Mammary epithelial cell (primary cell): ENCODE measurements at regions of chr12 and their contacts with region 1.

Region 1: GRCh38 chr12:54324617-54325441 is at the start of gene COPZ1:
- DNase-seq: peak; percentile 100
- H3K4me3 ChIP-seq: peak within 1 kb of the TSS; percentile 60 to 80 (median 75)
- H3K27ac ChIP-seq: peak within 1 kb of the TSS; percentile 91
- H3K4me1 ChIP-seq: peaks cover 12% of the 10 kb centered on the region
- H3K27me3 ChIP-seq: no peaks in the 10 kb centered on the region
- CTCF ChIP-seq: peak; percentile 73 to 85
- total RNA-seq, gene COPZ1: 113 to 155 TPM

Region 2: GRCh38 chr12:54214553-54215406 is 110.0 kb before region 1 on chr12:
- CTCF ChIA-PET with region 1: interaction called, 3 read pairs
- dilution Hi-C with region 1: loop called (anchors 5 kb)
- in situ Hi-C with region 1: no loop called
- intact Hi-C with region 1: no loop called
- DNase-seq: peak; percentile 72
- H3K4me3 ChIP-seq: peak overlapping the region; percentile 19 to 29 (median 20)
- H3K27ac ChIP-seq: no peak overlapping the region
- H3K4me1 ChIP-seq: peaks cover 14% of the 10 kb centered on the region
- H3K27me3 ChIP-seq: no peaks in the 10 kb centered on the region
- CTCF ChIP-seq: peak; percentile 91 to 98

Region 3: GRCh38 chr12:54251667-54252284 is 73.1 kb before region 1 on chr12:
- CTCF ChIA-PET with region 1: interaction called, 5 read pairs
- dilution Hi-C with region 1: no loop called
- in situ Hi-C with region 1: no loop called
- intact Hi-C with region 1: loop called (anchors 1 kb)
- DNase-seq: no peak
- H3K4me3 ChIP-seq: no peak overlapping the region
- H3K27ac ChIP-seq: no peak overlapping the region
- H3K4me1 ChIP-seq: no peaks in the 10 kb centered on the region
- H3K27me3 ChIP-seq: no peaks in the 10 kb centered on the region
- CTCF ChIP-seq: peak; percentile 68 to 76

Region 4: DNA sequence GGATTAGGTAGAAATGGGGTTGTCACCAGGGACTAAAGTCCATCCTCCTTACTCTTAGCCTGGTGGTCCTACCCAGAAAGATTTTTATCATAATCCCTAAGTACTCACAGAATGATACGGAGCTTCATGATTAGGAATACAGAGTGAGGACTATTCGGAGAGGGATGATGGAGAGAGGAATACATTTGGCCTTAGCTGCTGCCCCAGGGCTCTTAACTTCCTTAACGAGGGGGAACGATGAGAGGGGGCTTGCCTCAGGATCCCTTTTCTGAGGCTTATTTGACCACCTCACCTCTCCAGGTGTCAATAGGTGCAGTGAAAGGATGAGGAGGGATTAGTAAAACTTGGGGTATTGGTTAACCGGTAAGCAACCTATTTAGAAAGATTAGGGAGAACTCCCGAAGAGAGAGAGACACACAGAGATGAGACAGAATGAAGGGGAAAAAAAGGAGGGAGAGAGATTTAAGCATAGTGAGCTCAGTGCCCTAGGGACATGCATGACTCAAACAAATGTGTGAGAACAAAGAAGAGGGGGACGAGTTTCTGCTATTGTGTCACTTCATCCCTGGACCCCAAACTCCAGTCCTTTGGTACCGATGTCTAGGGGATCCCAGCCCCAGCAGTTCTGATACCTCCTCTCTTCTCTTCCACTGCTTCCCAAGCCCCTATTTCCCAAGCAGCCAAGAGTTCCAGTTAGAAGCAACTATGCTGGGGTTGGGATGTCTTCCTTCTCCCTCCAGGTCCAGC is 25.1 kb before region 1 on chr12:
- CTCF ChIA-PET with region 1: interaction called, 10 read pairs
- dilution Hi-C with region 1: no loop called
- in situ Hi-C with region 1: no loop called
- intact Hi-C with region 1: loop called (anchors 1 kb)
- DNase-seq: no peak
- H3K4me3 ChIP-seq: no peak overlapping the region
- H3K27ac ChIP-seq: no peak overlapping the region
- H3K4me1 ChIP-seq: peaks cover 40% of the 10 kb centered on the region
- H3K27me3 ChIP-seq: no peaks in the 10 kb centered on the region
- CTCF ChIP-seq: no peak

Region 5: GRCh38 chr12:54359033-54359761 is 34.4 kb after region 1 on chr12:
- CTCF ChIA-PET with region 1: interaction called, 11 read pairs
- dilution Hi-C with region 1: no loop called
- in situ Hi-C with region 1: no loop called
- intact Hi-C with region 1: no loop called
- DNase-seq: peak; percentile 98
- H3K4me3 ChIP-seq: peak overlapping the region; percentile 43 to 73 (median 53)
- H3K27ac ChIP-seq: peak overlapping the region; percentile 81
- H3K4me1 ChIP-seq: peaks cover 24% of the 10 kb centered on the region
- H3K27me3 ChIP-seq: no peaks in the 10 kb centered on the region
- CTCF ChIP-seq: no peak

Region 6: DNA sequence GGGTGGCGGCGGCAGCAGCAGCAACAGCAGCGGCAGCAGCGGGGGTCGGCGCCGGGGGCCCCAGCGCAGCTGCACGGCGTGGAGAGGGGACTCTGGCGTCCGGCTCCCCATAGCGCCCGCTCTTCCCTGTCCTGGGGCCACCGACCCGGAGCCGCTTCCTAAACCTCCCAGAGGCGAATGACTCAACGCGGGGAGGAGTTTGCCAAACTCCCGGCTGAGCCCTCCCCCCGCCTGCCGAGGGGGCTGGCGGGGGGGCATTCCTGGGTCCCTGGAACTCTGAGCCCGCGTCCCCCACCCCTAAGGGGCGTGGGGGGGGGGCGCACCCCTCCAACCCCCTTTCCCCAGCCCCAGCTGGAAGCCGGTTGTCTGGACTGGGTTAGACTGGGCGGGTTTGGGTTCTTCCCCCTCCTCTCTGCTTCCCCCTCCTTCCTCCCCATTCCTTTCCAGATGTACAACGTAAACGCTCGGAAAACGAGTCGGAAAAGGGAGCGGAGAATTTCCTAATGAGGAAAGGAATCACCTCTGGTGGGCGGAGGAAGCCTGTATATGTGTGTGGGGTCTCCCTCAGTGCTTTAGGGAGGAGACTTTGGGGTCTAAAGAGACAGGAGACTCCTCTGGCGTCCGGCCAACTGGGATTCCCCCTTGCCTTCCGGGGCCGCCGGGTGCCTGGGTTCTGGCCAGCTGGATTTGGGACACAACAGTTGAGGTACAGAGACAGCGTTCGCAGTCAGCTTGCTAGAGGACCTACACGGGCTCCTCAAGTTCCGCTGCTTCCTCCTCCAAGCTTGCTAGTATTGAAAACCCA is 94.5 kb after region 1 on chr12 and contains the start of gene ITGA5:
- CTCF ChIA-PET with region 1: no interaction called
- dilution Hi-C with region 1: no loop called
- in situ Hi-C with region 1: no loop called
- intact Hi-C with region 1: no loop called
- DNase-seq: peak; percentile 76
- H3K4me3 ChIP-seq: peak within 1 kb of the TSS; percentile 74 to 87 (median 82)
- H3K27ac ChIP-seq: peak within 1 kb of the TSS; percentile 66
- H3K4me1 ChIP-seq: peaks cover 56% of the 10 kb centered on the region
- H3K27me3 ChIP-seq: no peaks in the 10 kb centered on the region
- CTCF ChIP-seq: no peak
- total RNA-seq, gene ITGA5: 74.2 to 128 TPM

Region 7: GRCh38 chr12:55926738-55927587 is 1602.1 kb after region 1 on chr12:
- CTCF ChIA-PET with region 1: interaction called, 22 read pairs
- dilution Hi-C with region 1: no loop called
- in situ Hi-C with region 1: no loop called
- intact Hi-C with region 1: no loop called
- DNase-seq: peak; percentile 91
- H3K4me3 ChIP-seq: peak overlapping the region; percentile 70 to 92 (median 77)
- H3K27ac ChIP-seq: peak overlapping the region; percentile 83
- H3K4me1 ChIP-seq: peaks cover 41% of the 10 kb centered on the region
- H3K27me3 ChIP-seq: no peaks in the 10 kb centered on the region
- CTCF ChIP-seq: peak; percentile 41 to 82